ENCODE measurements at regions of chr9 and their contacts with region 1.

Region 1: GRCh38 chr9:121621113-121621449 is 30.4 kb upstream of the DAB2IP start:
- DNase-seq: no peak
- H3K4me3 ChIP-seq: no peak overlapping the region
- H3K27me3 ChIP-seq: no peaks in the 10 kb centered on the region
- CTCF ChIP-seq: peak; percentile 57

Region 2: DNA sequence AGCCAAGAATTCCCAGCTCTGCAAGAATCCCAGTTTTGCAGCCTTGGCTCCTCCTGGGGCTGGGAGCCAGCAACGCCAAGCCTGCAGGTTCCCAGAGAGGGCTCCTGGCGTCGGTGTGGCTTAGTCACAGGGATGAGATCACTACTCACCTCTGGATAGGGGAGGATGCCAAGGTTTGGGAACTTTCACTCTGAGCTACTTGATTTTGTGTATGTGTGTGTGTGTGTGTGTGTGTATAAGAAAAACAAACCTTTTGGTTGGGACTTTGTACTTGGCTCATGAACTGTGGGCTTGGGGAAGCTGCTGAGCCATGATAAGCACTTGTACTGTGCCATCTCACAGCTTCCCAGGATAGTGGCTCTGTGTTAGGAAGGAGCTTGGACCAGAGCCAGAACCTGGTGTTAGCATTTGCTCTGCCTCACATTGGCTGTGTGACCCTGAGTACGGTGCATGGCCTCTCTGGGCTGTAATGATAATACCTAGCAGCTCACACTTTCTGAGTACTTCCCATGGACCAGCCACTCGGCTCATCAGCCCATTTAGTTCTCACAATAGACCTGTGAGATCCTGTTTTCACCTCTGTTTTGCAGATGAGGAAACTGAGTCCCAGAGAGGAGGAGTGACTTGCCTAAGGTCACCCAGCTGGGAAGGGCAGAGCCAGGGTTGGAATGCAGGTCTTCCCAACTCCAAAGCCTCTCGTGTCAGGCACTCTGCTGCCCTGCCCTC is 11.1 kb before region 1 on chr9:
- CTCF ChIA-PET with region 1: interaction called, 30 read pairs
- POLR2A ChIA-PET with region 1: no interaction called
- DNase-seq: no peak
- H3K4me3 ChIP-seq: no peak overlapping the region
- H3K27me3 ChIP-seq: peaks cover 4% of the 10 kb centered on the region
- CTCF ChIP-seq: no peak

Region 3: DNA sequence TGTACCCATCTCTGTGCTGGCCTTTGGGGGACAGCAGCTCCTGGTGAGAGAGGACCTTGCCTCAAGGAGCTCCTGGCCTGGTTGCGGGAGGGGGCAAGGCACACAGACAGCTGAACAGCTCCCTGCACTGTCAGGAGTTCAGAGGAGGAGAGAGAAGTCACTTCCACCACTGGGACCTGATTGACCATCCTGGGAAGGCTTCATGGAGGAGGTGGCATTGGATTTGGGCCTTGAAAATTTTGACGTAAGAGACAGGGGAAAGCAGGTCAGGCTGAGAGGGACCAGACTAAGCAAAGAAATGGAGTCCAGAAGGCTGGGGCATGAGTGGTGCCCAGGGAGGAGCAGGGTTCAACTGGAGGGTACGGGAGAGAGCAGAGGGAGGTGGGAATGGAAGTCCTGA is 10.0 kb after region 1 on chr9:
- CTCF ChIA-PET with region 1: interaction called, 3 read pairs
- POLR2A ChIA-PET with region 1: interaction called, 12 read pairs
- DNase-seq: no peak
- H3K4me3 ChIP-seq: no peak overlapping the region
- H3K27me3 ChIP-seq: no peaks in the 10 kb centered on the region
- CTCF ChIP-seq: no peak

Region 4: GRCh38 chr9:121725008-121725775 is 104.1 kb after region 1 on chr9:
- CTCF ChIA-PET with region 1: no interaction called
- POLR2A ChIA-PET with region 1: no interaction called
- DNase-seq: peak; percentile 97
- H3K4me3 ChIP-seq: no peak overlapping the region
- H3K27me3 ChIP-seq: no peaks in the 10 kb centered on the region
- CTCF ChIP-seq: no peak

Measured in BJ (cell line).